Right ventricle myocardium inferior (tissue), 1 donor: ENCODE measurements at regions of chr17 and their contacts with region 1.

Region 1: DNA sequence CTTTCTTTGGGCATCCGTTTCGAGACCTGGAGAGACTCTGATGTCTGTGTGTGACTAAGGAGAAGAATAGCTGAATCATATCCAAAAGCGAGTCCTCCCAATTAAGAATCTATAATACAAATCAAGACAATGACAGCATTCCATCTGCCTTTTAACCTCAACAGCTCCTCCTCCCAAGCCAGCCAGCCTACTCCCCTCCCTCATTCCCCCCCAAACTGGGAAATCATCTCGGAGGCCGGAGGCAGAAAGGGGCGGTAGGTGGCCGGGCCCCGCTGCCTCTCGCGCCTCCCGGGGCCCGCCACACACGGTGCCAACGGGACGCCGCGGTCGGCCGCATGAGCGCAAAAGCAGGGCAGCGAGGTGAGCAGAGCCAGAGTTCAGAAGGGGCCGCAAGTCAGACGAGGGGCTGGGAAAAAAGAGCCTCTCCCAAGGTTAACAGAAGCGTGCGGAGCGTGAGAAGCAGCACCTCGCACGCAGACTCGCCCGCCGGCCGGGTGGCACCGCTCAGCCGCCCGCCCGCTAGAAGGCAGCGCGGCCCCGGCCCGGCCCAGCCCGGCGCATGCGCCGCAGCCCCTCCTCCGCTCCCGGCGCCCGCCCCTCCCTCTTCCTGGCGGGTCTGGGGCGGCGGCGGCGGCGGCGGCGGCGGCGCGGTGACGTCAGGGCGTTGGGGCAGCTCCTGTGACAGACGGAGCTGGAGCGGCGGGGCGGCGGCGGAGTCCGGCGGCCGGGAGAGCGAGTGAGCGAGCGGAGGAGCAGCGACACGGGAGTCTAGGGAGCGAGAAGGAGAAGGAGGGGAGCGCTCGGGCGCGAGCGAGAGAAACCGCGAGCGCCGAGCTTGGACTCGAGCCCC is at the start of gene PAFAH1B1:
- DNase-seq: peak; percentile 96
- ATAC-seq: peak; percentile 95
- total RNA-seq, gene PAFAH1B1: 115 TPM

Region 2: GRCh38 chr17:2449486-2449885 is 143.7 kb before region 1 on chr17:
- intact Hi-C with region 1: no loop called
- DNase-seq: no peak
- ATAC-seq: no peak

Region 3: GRCh38 chr17:2484876-2485275 is 108.3 kb before region 1 on chr17:
- intact Hi-C with region 1: loop called (anchors 10 kb)
- DNase-seq: no peak
- ATAC-seq: no peak

Region 4: GRCh38 chr17:2511462-2512369 is 81.5 kb before region 1 on chr17 and contains the start of gene METTL16:
- intact Hi-C with region 1: loop called (anchors 1 kb)
- DNase-seq: peak; percentile 99
- ATAC-seq: peak; percentile 100
- total RNA-seq, gene METTL16: 20.1 TPM

Region 5: DNA sequence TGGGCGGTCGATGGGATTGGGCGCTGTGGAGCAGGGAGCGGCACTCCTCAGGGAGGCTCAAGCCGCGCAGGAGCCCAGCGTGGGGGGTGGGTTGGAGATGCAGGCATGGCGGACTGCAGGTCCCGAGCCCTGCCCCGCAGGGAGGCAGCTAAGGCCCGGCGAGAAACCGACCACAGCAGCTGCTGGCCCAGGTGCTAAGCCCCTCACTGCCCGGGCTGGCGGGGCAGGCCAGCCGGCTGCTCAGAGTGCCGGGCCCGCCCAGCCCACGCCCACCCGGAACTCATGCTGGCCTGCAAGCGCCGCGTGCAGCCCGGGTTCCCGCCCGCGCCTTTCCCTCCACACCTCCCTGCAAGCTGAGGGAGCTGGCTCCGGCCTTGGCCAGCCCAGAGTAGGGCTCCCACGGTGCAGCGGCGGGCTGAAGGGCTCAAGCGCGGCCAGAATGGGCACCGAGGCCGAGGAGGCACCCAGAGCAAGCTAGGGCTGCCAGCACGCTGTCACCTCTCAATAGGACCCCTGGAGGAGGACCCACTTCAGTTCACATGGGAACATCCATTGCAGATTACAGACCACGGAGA is 61.0 kb before region 1 on chr17:
- intact Hi-C with region 1: no loop called
- DNase-seq: no peak
- ATAC-seq: no peak

Region 6: GRCh38 chr17:2634361-2634960 is 41.3 kb after region 1 on chr17:
- intact Hi-C with region 1: loop called (anchors 5 kb)
- DNase-seq: no peak
- ATAC-seq: no peak

Region 7: DNA sequence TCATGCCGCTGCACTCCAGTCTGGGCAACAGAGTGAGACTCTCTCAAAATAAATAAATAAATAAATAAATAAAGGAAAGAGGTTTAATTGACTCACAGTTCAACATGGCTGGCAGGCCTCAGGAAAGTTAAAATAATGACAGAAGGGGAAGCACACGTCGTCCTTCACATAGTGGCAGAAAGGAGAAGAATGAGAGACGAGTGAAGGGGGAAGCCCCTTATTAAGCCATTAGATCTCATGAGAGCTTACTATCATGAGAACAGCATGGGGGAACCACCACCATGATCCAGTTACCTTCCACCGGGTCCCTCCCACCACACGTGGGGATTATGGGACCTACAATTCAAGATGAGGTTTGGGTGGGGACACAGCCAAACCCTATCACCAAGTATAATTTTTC is 54.8 kb after region 1 on chr17:
- intact Hi-C with region 1: no loop called
- DNase-seq: no peak
- ATAC-seq: no peak

Region 8: GRCh38 chr17:2672026-2672425 is 78.8 kb after region 1 on chr17:
- intact Hi-C with region 1: loop called (anchors 5 kb)
- DNase-seq: no peak
- ATAC-seq: no peak

Region 9: GRCh38 chr17:2700516-2701141 is 107.4 kb after region 1 on chr17:
- intact Hi-C with region 1: no loop called
- DNase-seq: peak; percentile 15
- ATAC-seq: no peak

Region 10: GRCh38 chr17:2711601-2712299 is 118.6 kb after region 1 on chr17 and contains the start of gene CLUH:
- intact Hi-C with region 1: loop called (anchors 1 kb)
- DNase-seq: peak; percentile 99
- ATAC-seq: peak; percentile 89
- total RNA-seq, gene CLUH: 180 TPM